Gastrocnemius medialis (tissue), 4 donors: ENCODE measurements at regions of chr6 and their contacts with region 1.

Region 1: GRCh38 chr6:134882426-134883038 is 67.4 kb downstream of the ALDH8A1 start:
- DNase-seq: peak; percentile 31 to 67
- ATAC-seq: peak; percentile 80 to 90
- H3K4me3 ChIP-seq: no peak overlapping the region
- H3K27ac ChIP-seq: no peak overlapping the region
- H3K4me1 ChIP-seq: peaks cover 0 to 3% of the 10 kb centered on the region in 2 donors
- H3K27me3 ChIP-seq: no peaks in the 10 kb centered on the region
- CTCF ChIP-seq: peak; percentile 75 to 95 (median 92)
- POLR2A ChIP-seq: no peak

Region 2: DNA sequence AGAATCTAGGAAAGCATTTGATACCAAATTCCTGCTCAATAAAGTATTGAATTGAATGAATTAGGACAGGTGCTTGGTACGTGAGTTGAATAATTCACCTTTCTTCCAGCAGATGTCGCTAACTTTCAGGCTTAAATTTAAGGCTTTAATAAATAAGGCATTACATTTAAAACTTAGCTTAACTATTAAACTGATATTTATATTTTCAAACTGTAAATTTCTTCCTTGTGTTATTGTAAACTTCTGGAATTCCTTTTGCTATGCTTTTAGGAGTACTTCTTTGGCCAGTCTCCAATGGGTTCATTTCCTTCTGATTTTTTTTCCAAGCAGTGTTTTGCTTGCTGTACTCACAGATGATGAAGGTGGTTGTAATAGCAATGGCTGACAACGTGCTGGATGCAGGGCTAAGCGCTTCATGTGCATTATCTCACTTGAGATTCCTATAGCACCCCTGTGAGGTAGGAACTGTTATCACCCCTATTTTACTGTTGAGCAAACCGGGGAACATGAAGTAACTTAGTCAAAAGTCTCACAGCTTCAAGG is 758.8 kb before region 1 on chr6:
- in situ Hi-C with region 1: no loop called
- intact Hi-C with region 1: loop called (anchors 1 kb)
- DNase-seq: no peak
- ATAC-seq: peak in 1 of 2 donors; percentile 49
- H3K4me3 ChIP-seq: no peak overlapping the region
- H3K27ac ChIP-seq: no peak overlapping the region
- H3K4me1 ChIP-seq: no peaks in the 10 kb centered on the region
- H3K27me3 ChIP-seq: no peaks in the 10 kb centered on the region
- CTCF ChIP-seq: peak; percentile 17 to 74 (median 56)
- POLR2A ChIP-seq: no peak

Region 3: GRCh38 chr6:134161036-134161435 is 721.5 kb before region 1 on chr6:
- in situ Hi-C with region 1: loop called in 2 of 4 experiments (anchors 5 to 25 kb)
- intact Hi-C with region 1: loop called (anchors 1 kb)
- DNase-seq: no peak
- ATAC-seq: no peak
- H3K4me3 ChIP-seq: no peak overlapping the region
- H3K27ac ChIP-seq: no peak overlapping the region
- H3K4me1 ChIP-seq: peaks cover 0 to 8% of the 10 kb centered on the region in 2 donors
- H3K27me3 ChIP-seq: no peaks in the 10 kb centered on the region
- CTCF ChIP-seq: no peak
- POLR2A ChIP-seq: no peak

Region 4: DNA sequence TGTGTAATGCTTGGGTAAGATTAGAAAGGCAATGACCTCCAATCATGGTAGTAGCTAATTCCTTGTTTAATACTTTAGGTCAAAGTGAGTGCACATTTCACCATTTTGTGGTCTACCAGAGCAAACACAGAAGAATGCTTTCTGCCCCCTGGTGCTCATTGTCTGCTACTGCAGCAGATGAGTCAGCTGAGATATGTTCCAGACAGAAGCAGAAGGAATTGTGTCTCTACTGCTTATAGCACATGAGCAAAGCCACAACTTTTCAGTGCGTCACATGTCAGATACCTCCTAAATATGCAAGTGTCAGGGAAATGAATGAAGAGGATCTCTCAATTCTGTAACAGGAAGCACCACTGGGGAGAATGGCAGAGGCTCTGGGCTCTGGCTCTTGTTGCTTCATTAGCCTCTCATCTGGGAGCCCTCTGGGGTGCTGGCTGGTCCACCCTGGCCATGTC is 241.5 kb before region 1 on chr6:
- in situ Hi-C with region 1: no loop called
- intact Hi-C with region 1: loop called (anchors 5 kb)
- DNase-seq: peak; percentile 68 to 84
- ATAC-seq: peak; percentile 90 to 97
- H3K4me3 ChIP-seq: no peak overlapping the region
- H3K27ac ChIP-seq: peak overlapping the region in 3 of 4 donors; percentile 3 to 57 (median 21)
- H3K4me1 ChIP-seq: peaks cover 7 to 12% of the 10 kb centered on the region in 2 donors
- H3K27me3 ChIP-seq: no peaks in the 10 kb centered on the region
- CTCF ChIP-seq: peak; percentile 92 to 98 (median 95)
- POLR2A ChIP-seq: no peak

Region 5: GRCh38 chr6:134822920-134823709 is 59.4 kb before region 1 on chr6:
- in situ Hi-C with region 1: no loop called
- intact Hi-C with region 1: loop called (anchors 2 kb)
- DNase-seq: peak; percentile 18 to 26
- ATAC-seq: peak; percentile 62 to 70
- H3K4me3 ChIP-seq: no peak overlapping the region
- H3K27ac ChIP-seq: no peak overlapping the region
- H3K4me1 ChIP-seq: peaks cover 13 to 18% of the 10 kb centered on the region in 2 donors
- H3K27me3 ChIP-seq: no peaks in the 10 kb centered on the region
- CTCF ChIP-seq: peak; percentile 84 to 95 (median 89)
- POLR2A ChIP-seq: no peak

Region 6: DNA sequence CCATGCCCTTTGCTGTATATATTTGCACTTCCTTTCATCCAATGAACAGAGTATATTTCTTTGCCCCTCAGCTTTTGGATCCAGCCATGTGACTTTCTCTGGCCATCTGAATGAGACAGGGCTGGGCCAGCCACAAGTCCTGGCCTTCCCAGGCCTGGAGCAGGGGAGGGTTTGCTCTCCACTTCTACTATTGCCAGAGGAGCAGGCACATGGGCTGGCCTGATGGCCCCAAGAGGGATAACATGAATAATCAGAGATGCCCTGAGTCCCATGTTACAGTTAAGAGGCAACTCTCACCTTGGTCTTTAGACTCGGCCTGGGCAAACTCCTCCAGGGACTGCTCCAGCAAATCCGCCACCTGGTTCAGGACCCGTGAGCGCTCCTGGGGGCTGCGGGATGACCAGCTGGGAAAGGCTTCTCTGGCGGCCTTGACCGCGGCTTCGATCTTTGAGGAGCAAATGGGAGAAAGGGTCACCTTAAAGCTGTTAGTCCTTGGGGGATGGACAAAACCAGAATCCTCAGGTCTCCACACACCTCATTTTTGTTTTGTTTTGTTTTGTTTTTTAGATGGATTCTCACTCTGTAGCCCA is 61.1 kb after region 1 on chr6:
- in situ Hi-C with region 1: no loop called
- intact Hi-C with region 1: loop called (anchors 2 kb)
- DNase-seq: no peak
- ATAC-seq: no peak
- H3K4me3 ChIP-seq: no peak overlapping the region
- H3K27ac ChIP-seq: no peak overlapping the region
- H3K4me1 ChIP-seq: no peaks in the 10 kb centered on the region
- H3K27me3 ChIP-seq: no peaks in the 10 kb centered on the region
- CTCF ChIP-seq: no peak
- POLR2A ChIP-seq: no peak